PC-3 (cell line): ENCODE measurements at regions of chr3 and their contacts with region 1.

Region 1: DNA sequence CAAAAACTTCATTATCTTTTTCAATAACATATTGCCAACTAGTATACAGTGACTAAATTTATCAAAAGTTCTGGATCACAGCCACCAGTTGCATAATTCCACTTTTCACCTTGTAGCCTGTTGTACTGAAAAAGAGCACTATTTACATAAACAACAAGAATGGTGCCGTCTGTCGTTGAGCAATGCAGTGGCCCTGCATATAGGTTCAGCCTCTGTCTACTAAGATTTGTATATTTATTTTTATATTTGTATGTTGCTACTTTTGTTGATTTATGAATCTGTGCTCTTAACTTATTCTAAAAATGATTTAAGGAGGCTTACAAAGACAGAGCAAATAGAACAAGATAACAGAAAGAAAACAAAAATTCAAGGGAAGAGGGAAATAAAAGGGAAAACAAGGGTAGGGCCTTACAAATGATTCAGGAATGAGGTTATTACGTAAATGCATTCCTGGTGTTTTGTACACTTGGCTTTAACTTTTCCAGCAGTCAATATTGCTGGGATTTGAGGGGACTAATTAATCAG is 257.6 kb upstream of the STT3B start:
- DNase-seq: peak; percentile 79
- ATAC-seq: peak; percentile 68
- H3K4me3 ChIP-seq: peak overlapping the region; percentile 15; the same call in 1 of the 2 replicates
- H3K27ac ChIP-seq: peak overlapping the region; percentile 81
- H3K4me1 ChIP-seq: peaks cover 34% of the 10 kb centered on the region
- H3K27me3 ChIP-seq: no peaks in the 10 kb centered on the region
- CTCF ChIP-seq: no peak

Region 2: GRCh38 chr3:30631243-30631904 is 643.7 kb before region 1 on chr3:
- CTCF ChIA-PET with region 1: no interaction called
- POLR2A ChIA-PET with region 1: interaction called, 19 read pairs
- intact Hi-C with region 1: no loop called
- DNase-seq: peak; percentile 51
- ATAC-seq: peak; percentile 56
- H3K4me3 ChIP-seq: no peak overlapping the region
- H3K27ac ChIP-seq: peak overlapping the region; percentile 24
- H3K4me1 ChIP-seq: peaks cover 33% of the 10 kb centered on the region
- H3K27me3 ChIP-seq: no peaks in the 10 kb centered on the region
- CTCF ChIP-seq: no peak

Region 3: DNA sequence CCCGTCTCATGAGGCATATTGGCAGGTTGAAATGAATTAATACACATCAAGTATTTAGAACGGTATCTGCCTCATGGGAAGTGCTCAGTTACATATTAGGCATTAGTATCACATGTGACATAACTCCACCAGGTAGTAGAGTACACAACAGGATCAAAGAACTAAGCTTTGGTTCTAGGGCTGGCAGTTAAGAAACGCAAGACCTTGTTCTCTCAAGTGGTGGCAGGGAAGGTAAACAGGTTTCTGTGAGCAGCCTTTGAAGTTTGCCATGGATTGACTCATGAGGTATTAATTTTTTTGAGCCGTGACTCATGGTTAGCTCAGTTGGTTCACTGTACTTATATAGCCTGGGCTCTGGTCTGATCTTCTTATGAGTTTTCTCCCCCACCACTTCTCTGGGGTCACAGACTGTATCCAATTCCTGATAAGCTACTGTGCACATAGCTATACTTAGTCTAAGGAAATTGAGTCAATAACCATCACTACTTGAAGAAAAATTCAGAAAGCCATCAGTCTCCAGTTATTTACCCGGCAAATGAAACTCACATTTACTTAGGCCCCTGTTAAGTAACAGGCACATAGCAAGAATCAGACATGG is 102.0 kb after region 1 on chr3:
- CTCF ChIA-PET with region 1: no interaction called
- POLR2A ChIA-PET with region 1: no interaction called
- intact Hi-C with region 1: loop called (anchors 5 kb)
- DNase-seq: peak; percentile 98
- ATAC-seq: peak; percentile 99
- H3K4me3 ChIP-seq: no peak overlapping the region
- H3K27ac ChIP-seq: peak overlapping the region; percentile 44
- H3K4me1 ChIP-seq: peaks cover 19% of the 10 kb centered on the region
- H3K27me3 ChIP-seq: no peaks in the 10 kb centered on the region
- CTCF ChIP-seq: no peak